Uterus (tissue), 4 donors: ENCODE measurements at regions of chr7 and their contacts with region 1.

Region 1: DNA sequence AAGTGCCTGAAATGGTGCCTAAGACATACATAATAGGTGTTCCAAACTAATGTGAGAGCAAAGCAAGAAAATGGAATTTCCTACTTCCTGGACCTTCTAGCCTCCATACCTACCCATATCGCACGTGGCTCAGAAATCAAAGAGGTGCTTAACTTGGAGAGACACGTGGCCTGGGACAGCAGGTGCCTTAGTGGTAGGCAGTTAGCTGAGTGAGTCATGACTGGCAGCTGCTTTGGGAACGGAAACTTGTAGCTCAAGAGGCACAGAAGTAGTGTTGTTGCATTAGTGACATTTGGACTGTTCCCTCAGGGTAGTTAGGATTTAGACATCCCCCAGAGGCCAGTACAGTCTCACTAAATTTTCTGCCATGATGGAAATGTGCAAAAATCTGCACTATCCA is 12.0 kb upstream of the BMPER start:
- DNase-seq: no peak
- H3K4me3 ChIP-seq: no peak overlapping the region
- H3K27ac ChIP-seq: no peak overlapping the region
- H3K4me1 ChIP-seq: no peaks in the 10 kb centered on the region
- H3K27me3 ChIP-seq: no peaks in the 10 kb centered on the region
- CTCF ChIP-seq: no peak
- POLR2A ChIP-seq: no peak

Region 2: DNA sequence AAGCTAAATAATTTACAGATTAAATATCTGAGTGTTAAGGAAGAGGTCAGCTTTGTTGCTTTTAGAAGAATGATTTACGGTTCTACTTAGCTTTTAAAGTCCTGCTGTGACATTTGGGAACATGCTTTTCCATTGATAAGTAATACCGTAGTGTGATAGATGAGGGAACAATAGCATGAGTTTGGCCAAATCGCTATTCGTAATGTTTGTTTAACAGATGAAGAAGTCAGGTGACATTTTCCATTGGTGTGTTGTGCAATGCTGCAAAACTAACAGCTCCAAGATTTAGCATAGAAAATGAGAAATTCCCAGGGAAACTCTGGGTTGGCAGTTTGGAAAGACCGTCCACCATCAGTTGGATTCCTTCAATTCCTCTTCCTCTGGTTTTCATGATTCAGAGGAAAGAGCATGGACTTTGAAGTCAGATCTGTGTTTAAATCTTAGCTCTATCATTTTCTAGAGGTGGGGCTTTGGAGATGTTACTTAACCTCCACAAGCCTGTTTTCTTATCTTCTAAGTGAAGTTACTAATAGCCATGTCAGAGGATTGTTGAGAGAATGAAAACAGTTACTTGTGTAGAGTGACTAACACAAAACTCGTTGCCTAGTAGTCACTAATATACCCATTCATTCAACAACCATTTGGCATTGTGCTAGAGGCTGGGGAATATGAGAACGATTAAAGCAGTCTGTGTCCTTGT is 128.5 kb before region 1 on chr7:
- intact Hi-C with region 1: loop called (anchors 5 kb)
- DNase-seq: no peak
- H3K4me3 ChIP-seq: no peak overlapping the region
- H3K27ac ChIP-seq: no peak overlapping the region
- H3K4me1 ChIP-seq: no peaks in the 10 kb centered on the region
- H3K27me3 ChIP-seq: no peaks in the 10 kb centered on the region
- CTCF ChIP-seq: no peak
- POLR2A ChIP-seq: no peak

Region 3: DNA sequence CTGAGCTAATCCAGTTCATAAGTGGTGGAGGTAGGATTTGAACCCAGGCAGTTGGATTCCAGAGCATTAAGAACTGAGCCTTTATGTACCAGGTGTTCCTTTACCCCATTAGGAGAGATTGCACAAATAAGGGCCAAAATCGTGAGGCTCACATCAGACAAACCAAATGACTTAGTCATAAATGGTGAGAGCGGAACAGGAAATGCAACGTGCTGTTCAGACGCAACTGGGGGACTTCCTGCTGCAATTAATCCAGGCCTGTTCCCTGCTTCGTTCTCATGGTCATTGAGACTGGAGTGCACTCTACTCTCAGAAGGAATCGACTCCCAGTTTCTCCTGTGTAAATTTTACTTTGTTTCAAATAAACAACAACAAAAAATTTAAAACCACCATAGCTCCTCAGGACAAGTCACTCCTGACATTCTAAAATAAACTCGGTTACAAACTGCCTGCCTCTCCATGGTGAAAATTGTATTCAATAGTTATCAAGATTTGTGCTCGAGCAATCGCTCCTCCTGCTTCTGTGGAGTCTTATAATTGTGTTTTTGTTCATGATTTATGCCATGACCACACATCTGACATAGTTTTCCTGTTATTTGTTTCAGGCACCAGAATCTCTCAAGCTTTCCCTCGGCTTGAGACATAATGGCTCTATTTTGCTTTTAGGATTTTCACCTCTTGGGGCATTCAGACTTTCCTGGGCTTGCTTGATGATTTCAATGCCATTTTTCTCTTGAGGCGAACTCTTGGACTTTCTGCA is 103.3 kb before region 1 on chr7:
- intact Hi-C with region 1: no loop called
- DNase-seq: no peak
- H3K4me3 ChIP-seq: no peak overlapping the region
- H3K27ac ChIP-seq: no peak overlapping the region
- H3K4me1 ChIP-seq: no peaks in the 10 kb centered on the region
- H3K27me3 ChIP-seq: no peaks in the 10 kb centered on the region
- CTCF ChIP-seq: no peak
- POLR2A ChIP-seq: no peak

Region 4: GRCh38 chr7:33814400-33814799 is 79.0 kb before region 1 on chr7:
- intact Hi-C with region 1: no loop called
- DNase-seq: no peak
- H3K4me3 ChIP-seq: peak overlapping the region in 1 of 2 donors; percentile 30
- H3K27ac ChIP-seq: peak overlapping the region; percentile 34 to 38
- H3K4me1 ChIP-seq: no peaks in the 10 kb centered on the region
- H3K27me3 ChIP-seq: no peaks in the 10 kb centered on the region
- CTCF ChIP-seq: no peak
- POLR2A ChIP-seq: no peak